Natural killer cell (primary cell): ENCODE measurements at regions of chr17 and their contacts with region 1.

Region 1: GRCh38 chr17:51166197-51166986 is at the start of gene NME2:
- DNase-seq: peak; percentile 65 to 80
- ATAC-seq: peak; percentile 81 to 90 (median 89)
- H3K4me3 ChIP-seq: peak within 1 kb of the TSS; percentile 90
- H3K4me3 Mint-ChIP-seq: peak within 1 kb of the TSS; percentile 90
- H3K27ac ChIP-seq: peak within 1 kb of the TSS; percentile 70
- H3K27ac Mint-ChIP-seq: peak within 1 kb of the TSS; percentile 82 to 93
- H3K4me1 ChIP-seq: peaks cover 23% of the 10 kb centered on the region
- H3K4me1 Mint-ChIP-seq: peaks cover 10 to 25% of the 10 kb centered on the region in 2 donors
- H3K27me3 ChIP-seq: no peaks in the 10 kb centered on the region
- H3K27me3 Mint-ChIP-seq: no peaks in the 10 kb centered on the region
- CTCF ChIP-seq: no peak
- total RNA-seq, gene NME2: 100 to 109 (median 101) TPM

Region 2: GRCh38 chr17:51260125-51260880 is 93.9 kb after region 1 on chr17 and contains the start of gene UTP18:
- intact Hi-C with region 1: loop called (anchors 2 kb)
- DNase-seq: peak; percentile 93 to 99
- ATAC-seq: peak; percentile 85 to 96 (median 86)
- H3K4me3 ChIP-seq: peak within 1 kb of the TSS; percentile 53
- H3K4me3 Mint-ChIP-seq: peak within 1 kb of the TSS; percentile 94
- H3K27ac ChIP-seq: peak within 1 kb of the TSS; percentile 85
- H3K27ac Mint-ChIP-seq: peak within 1 kb of the TSS; percentile 91 to 97
- H3K4me1 ChIP-seq: peaks cover 26% of the 10 kb centered on the region
- H3K4me1 Mint-ChIP-seq: peaks cover 43 to 52% of the 10 kb centered on the region in 2 donors
- H3K27me3 ChIP-seq: no peaks in the 10 kb centered on the region
- H3K27me3 Mint-ChIP-seq: no peaks in the 10 kb centered on the region
- CTCF ChIP-seq: no peak
- total RNA-seq, gene UTP18: 33.5 to 40.3 (median 34.6) TPM